Dendritic cell treated with granulocyte-macrophage colony-stimulating factor and Interleukin-4, amounts not matched to agents 40 ng/mL and 50 ng/mL, for 4 days (primary cell): ENCODE measurements at regions of chr12 and their contacts with region 1.

Region 1: DNA sequence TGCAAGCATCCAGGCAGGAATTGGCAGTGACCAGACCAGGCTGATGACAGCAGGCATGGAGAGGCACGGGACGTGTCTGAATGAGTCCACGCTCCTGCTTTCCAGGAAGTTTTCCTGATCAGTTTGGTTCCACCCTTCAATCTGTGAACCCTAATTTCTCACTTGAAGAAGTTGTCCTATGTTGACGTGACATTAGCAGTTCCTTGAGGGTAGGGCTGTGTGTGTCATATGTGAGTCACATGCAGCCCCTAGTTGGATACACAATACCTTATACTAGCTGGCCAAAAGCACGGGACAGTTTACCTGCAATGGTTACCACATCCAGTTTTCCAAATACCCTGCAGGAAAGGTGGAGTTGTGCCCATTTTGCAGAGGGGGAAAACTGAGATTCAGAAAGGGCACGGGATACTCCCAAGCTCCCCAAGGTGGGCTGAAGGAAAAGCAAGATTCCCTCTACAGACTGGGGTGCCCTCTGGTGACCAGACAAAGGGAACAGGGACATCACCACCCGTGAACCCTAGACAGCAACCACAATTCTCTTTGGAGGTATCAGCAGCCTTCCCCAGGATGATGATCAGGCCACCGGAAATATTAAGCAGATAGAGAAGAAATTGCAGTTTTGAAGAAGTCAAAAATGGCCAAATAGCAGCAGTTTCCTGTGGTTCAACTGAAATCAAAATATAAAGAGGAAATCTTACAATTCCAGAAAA is 194.5 kb downstream of the PHETA1 start:
- H3K4me3 Mint-ChIP-seq: no peak overlapping the region
- H3K27ac Mint-ChIP-seq: peak overlapping the region; percentile 63
- H3K4me1 Mint-ChIP-seq: peaks cover 71% of the 10 kb centered on the region
- H3K27me3 Mint-ChIP-seq: no peaks in the 10 kb centered on the region

Region 2: GRCh38 chr12:110937104-110937641 is 237.2 kb before region 1 on chr12:
- intact Hi-C with region 1: loop called (anchors 5 kb)
- H3K4me3 Mint-ChIP-seq: no peak overlapping the region
- H3K27ac Mint-ChIP-seq: no peak overlapping the region
- H3K4me1 Mint-ChIP-seq: peaks cover 16% of the 10 kb centered on the region
- H3K27me3 Mint-ChIP-seq: peaks cover 14% of the 10 kb centered on the region

Region 3: DNA sequence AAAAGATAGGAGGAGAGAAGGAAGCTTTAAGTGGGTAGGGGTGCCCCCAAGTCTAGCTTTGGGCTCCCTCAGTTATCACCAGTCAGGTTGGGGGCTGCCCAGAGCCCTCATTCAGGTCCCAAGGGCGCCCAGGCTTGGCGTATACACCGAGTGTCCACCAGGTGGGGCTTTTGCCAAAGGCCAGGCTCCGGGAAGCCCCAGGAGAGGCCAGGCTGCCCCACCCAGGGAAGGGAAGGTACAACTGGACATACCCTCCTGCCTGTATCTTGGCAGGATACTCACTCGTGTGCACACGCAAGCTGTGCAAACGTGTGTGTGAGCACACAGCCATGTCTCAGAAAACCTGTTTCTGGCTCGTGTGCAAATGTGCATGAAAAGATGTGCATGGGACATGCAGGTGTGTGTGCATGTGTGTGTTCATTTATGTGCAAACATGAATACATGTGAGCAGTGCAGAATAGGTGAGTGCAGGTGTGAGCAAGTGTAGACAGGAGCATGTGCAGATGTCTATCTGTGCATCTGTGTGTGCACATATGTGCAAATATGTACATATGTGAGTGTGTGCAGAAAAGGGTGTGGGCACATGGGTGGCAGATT is 150.1 kb before region 1 on chr12:
- intact Hi-C with region 1: loop called (anchors 1 kb)
- H3K4me3 Mint-ChIP-seq: no peak overlapping the region
- H3K27ac Mint-ChIP-seq: no peak overlapping the region
- H3K4me1 Mint-ChIP-seq: peaks cover 4% of the 10 kb centered on the region
- H3K27me3 Mint-ChIP-seq: peaks cover 44% of the 10 kb centered on the region

Region 4: DNA sequence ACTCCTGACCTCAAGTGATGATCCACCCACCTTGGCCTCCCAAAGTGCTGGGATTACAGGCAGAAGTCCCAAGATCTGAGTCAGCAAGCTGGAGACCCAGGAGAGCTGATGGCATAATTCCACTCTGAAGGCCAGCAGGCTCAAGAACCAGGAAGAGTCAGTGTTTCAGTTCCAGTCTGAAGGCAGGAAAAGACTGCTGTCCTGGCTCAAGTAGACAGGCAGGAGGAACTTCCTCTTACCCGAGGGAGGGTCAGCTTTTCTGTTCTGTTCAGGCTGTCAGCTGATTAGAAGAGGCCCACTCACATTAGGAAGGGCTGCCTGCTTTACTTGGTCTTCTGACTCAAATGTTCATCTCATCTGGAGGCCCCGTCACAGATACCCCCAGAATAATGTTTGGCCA is 48.1 kb before region 1 on chr12:
- intact Hi-C with region 1: loop called (anchors 5 kb)
- H3K4me3 Mint-ChIP-seq: no peak overlapping the region
- H3K27ac Mint-ChIP-seq: peak overlapping the region; percentile 80
- H3K4me1 Mint-ChIP-seq: peaks cover 72% of the 10 kb centered on the region
- H3K27me3 Mint-ChIP-seq: no peaks in the 10 kb centered on the region

Region 5: DNA sequence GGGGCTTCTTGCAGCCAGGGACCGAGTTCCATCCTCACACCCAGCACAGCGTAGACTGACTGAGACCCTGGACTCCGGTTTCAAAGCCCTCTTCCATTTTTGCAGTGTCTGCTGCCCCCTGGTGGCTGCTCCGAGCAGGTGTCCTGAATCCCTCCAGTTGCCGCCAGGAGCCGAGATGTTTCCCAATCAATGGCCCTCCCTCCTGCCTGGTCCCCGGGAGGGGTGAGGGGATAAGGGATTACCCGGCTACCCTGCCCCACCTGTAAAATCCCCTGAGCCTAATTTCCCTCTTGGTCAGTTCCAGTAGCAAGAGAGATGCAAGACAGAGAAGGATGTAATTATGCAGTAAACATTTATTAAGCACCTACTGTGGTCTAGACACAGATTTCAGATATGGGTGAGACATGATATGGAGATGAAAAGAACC is 139.4 kb after region 1 on chr12:
- intact Hi-C with region 1: loop called (anchors 10 kb)
- H3K4me3 Mint-ChIP-seq: peak overlapping the region; percentile 53
- H3K27ac Mint-ChIP-seq: no peak overlapping the region
- H3K4me1 Mint-ChIP-seq: peaks cover 41% of the 10 kb centered on the region
- H3K27me3 Mint-ChIP-seq: peaks cover 3% of the 10 kb centered on the region